A673 (cell line): ENCODE measurements at regions of chr9 and their contacts with region 1.

Region 1: DNA sequence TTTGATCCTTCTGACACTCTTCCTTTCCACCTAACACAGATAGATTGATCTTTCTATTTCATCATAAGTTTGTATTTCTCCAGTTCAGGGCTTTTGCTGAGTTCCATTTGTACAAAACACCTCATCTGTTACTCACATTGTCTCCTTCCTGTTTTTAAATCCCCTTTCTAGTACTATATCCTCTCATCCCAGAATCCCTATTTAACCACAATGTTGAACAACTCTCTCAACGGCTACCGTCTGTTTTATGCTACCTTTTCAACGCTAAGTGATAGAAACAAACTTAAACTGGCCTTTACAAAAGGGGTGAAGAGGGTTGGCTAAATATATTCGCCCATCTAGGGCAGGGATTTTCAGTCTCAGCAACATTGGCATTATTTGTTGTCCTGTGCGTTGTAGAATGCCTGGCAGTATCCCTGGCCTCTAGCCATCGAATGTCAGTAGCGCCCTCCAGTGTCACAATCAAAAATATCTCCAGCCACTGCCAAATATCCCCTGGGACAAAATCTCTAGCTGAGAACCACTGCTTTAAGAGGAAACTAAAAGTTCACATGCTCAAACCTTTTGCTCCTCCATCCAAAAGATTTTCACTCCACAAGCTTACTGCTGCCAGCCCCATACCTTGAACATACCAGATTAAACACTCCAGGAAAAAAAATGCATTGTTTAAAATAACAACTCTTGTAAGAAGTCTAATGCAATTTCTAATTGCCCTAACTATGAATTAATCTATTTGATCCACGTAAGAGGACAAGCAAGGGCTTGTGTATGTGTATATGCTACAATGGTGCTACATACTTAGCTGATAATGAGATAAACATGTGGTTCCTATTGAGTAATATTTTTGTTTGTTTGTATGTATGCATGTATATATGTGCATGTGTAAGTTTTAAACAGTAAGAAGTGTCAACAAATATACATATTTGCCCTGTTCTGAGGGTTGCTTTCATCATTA is 344.0 kb downstream of the PTPRD start:
- DNase-seq: peak; percentile 67
- H3K4me3 ChIP-seq: no peak overlapping the region
- H3K27ac ChIP-seq: no peak overlapping the region
- H3K4me1 ChIP-seq: no peaks in the 10 kb centered on the region
- H3K27me3 ChIP-seq: no peaks in the 10 kb centered on the region
- CTCF ChIP-seq: peak; percentile 65

Region 2: DNA sequence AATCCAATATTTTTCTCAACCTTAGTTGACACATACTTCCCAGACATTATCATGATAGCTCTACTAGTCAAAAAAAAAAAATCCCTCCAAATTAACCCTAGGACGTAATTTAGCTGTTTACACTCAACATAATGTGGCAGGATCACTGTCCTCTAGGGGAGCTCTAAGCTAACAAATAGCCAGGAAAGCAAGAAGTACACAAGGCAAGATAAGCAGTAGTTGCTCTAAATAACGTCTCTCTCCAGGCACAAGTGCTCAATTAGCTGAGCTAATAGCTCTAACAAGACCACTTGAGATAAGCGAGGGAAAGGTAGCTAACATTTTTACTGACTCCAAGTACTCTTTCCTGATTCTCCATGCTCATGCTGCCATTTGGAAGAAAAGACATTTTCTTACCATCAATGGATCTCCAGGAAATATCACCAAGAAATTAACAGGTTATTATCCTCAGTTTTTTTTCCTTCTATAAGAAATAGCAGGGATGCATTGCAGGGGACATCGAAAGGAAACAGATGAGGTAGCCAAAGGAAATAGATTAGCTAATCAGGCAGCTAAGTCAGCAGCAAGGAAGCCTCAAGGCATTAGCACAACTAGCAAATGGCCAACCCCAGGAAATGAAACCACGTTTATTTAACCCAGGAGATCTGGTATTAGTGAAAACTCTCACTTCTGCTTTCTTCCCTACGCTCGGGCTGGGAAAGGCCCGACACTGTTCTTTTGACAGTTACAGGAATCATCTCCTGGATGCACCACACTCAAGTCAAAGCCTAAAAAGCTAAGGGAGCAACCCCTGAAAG is 270.1 kb before region 1 on chr9:
- CTCF ChIA-PET with region 1: interaction called, 6 read pairs
- POLR2A ChIA-PET with region 1: no interaction called
- intact Hi-C with region 1: loop called (anchors 5 kb)
- DNase-seq: peak; percentile 54
- H3K4me3 ChIP-seq: no peak overlapping the region
- H3K27ac ChIP-seq: no peak overlapping the region
- H3K4me1 ChIP-seq: no peaks in the 10 kb centered on the region
- H3K27me3 ChIP-seq: no peaks in the 10 kb centered on the region
- CTCF ChIP-seq: peak; percentile 61

Region 3: DNA sequence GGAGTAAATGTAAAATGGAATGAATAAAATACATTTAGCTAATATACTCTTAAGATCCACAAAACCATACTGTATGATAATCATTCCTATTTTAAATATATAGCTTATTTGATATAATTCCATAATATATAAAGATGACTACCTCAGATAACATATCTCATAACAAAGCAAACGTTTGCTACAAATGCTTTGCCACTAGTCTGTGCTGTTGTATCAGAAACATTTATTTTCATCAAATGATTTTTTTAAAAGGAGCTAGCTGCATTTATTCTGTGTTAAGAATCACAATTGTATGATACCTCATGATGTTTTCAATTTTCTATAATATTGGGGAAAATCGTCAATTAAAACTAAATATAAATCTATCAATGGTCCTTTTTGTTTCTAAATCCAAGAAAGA is 223.2 kb before region 1 on chr9:
- CTCF ChIA-PET with region 1: interaction called, 8 read pairs
- POLR2A ChIA-PET with region 1: no interaction called
- intact Hi-C with region 1: loop called (anchors 5 kb)
- DNase-seq: peak; percentile 14
- H3K4me3 ChIP-seq: no peak overlapping the region
- H3K27ac ChIP-seq: no peak overlapping the region
- H3K4me1 ChIP-seq: no peaks in the 10 kb centered on the region
- H3K27me3 ChIP-seq: no peaks in the 10 kb centered on the region
- CTCF ChIP-seq: peak; percentile 51

Region 4: GRCh38 chr9:10059044-10059443 is 209.8 kb before region 1 on chr9:
- CTCF ChIA-PET with region 1: interaction called, 3 read pairs
- POLR2A ChIA-PET with region 1: no interaction called
- intact Hi-C with region 1: loop called (anchors 1 kb)
- DNase-seq: peak; percentile 54
- H3K4me3 ChIP-seq: no peak overlapping the region
- H3K27ac ChIP-seq: no peak overlapping the region
- H3K4me1 ChIP-seq: peaks cover 11% of the 10 kb centered on the region
- H3K27me3 ChIP-seq: no peaks in the 10 kb centered on the region
- CTCF ChIP-seq: no peak

Region 5: DNA sequence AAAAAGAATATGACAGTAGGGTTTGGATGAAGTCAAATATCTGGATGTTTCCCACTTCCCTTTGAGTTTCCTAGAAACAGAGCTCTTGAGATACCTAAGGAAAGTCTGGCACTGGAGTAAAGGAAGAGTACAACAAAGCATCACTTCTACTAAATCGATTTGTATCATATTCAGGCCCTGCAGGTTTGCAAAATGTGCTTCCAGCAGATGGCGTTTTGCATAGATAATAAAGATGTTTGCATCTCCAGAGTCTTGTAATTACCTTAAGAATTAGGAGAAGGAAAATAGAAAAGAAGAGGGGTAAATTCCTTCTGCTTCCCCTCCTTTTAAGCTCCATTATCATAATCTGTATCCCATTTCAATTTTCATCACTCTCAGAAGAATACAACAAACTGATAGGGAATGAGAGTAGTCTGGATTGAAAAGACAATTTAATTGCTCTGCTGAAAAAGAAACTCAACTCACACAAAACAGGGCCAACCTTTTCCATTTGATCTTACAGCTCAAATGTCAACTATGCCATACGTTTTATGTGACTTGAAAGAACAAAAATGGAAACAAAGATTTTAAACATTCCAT is 36.4 kb before region 1 on chr9:
- CTCF ChIA-PET with region 1: no interaction called
- POLR2A ChIA-PET with region 1: no interaction called
- intact Hi-C with region 1: loop called (anchors 2 kb)
- DNase-seq: peak; percentile 18
- H3K4me3 ChIP-seq: no peak overlapping the region
- H3K27ac ChIP-seq: no peak overlapping the region
- H3K4me1 ChIP-seq: no peaks in the 10 kb centered on the region
- H3K27me3 ChIP-seq: no peaks in the 10 kb centered on the region
- CTCF ChIP-seq: peak; percentile 49; the same call in 1 of the 2 replicates